ENCODE measurements at regions of chr11 and their contacts with region 1.

Region 1: GRCh38 chr11:67288452-67289225 is 464 bp upstream of the ANKRD13D start:
- DNase-seq: peak; percentile 88 to 90
- ATAC-seq: peak; percentile 82 to 90 (median 86)
- H3K4me3 ChIP-seq: peak overlapping the region; percentile 56 to 99 (median 78)
- H3K27ac ChIP-seq: peak overlapping the region; percentile 76 to 98 (median 96)
- H3K4me1 ChIP-seq: peaks cover 7 to 91% (median 40%) of the 10 kb centered on the region in 9 donors
- H3K27me3 ChIP-seq: no peaks in the 10 kb centered on the region
- CTCF ChIP-seq: peak; percentile 26 to 72 (median 53)

Region 2: GRCh38 chr11:67271541-67272284 is 16.9 kb before region 1 on chr11:
- intact Hi-C with region 1: loop called in 3 of 10 experiments (anchors 2 kb)
- DNase-seq: peak in 1 of 2 donors; percentile 35
- ATAC-seq: no peak
- H3K4me3 ChIP-seq: peak overlapping the region in 3 of 10 donors; percentile 76 to 96 (median 77)
- H3K27ac ChIP-seq: peak overlapping the region; percentile 25 to 98 (median 90)
- H3K4me1 ChIP-seq: peaks cover 74 to 99% (median 95%) of the 10 kb centered on the region in 9 donors
- H3K27me3 ChIP-seq: no peaks in the 10 kb centered on the region
- CTCF ChIP-seq: no peak

Region 3: DNA sequence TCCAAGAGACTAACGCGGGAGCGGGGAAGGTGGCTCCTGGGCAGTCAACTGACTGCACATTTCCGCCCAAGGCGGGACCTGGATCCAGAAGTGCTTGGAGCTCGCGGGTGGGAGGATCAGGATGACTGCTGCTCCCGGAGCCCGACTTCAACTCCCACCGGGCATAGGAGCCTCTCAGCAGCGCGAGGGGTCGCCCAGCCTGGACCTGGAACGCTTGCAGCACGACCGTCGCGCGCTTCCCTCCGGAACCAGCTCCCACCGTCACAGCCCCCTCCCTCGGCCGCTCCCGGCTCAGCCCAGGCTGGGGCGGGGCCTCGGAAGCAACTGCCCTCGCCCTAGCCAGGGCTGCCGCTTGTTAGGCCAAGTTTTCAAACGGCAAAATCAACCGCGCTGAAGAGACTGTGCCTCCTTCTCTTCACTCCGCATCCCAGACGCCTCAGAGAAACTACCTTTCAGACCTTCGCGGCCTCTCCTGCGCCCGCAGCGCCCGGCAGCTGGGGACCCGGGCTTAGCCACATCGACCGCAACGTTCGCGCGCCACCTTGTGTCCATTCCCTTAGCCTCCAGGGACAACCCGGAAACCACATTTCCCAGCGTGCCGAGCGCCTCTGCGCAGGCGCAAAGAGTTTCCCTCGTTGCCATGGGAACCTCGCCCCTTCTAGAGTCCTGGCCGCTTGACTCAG is 28.7 kb after region 1 on chr11:
- intact Hi-C with region 1: loop called in 1 of 10 experiments (anchors 2 kb)
- DNase-seq: peak; percentile 96 to 97
- ATAC-seq: peak; percentile 93 to 97 (median 96)
- H3K4me3 ChIP-seq: peak overlapping the region; percentile 68 to 94 (median 78)
- H3K27ac ChIP-seq: peak overlapping the region; percentile 84 to 97 (median 94)
- H3K4me1 ChIP-seq: peaks cover 4 to 30% (median 19%) of the 10 kb centered on the region in 9 donors
- H3K27me3 ChIP-seq: no peaks in the 10 kb centered on the region
- CTCF ChIP-seq: peak; percentile 92 to 99 (median 97)